AG04449 (cell line): ENCODE measurements at regions of chr12 and their contacts with region 1.

Region 1: GRCh38 chr12:122871851-122872780 is 23.8 kb downstream of the VPS37B start:
- DNase-seq: no peak
- H3K4me3 ChIP-seq: peak overlapping the region; percentile 54
- CTCF ChIP-seq: no peak

Region 2: DNA sequence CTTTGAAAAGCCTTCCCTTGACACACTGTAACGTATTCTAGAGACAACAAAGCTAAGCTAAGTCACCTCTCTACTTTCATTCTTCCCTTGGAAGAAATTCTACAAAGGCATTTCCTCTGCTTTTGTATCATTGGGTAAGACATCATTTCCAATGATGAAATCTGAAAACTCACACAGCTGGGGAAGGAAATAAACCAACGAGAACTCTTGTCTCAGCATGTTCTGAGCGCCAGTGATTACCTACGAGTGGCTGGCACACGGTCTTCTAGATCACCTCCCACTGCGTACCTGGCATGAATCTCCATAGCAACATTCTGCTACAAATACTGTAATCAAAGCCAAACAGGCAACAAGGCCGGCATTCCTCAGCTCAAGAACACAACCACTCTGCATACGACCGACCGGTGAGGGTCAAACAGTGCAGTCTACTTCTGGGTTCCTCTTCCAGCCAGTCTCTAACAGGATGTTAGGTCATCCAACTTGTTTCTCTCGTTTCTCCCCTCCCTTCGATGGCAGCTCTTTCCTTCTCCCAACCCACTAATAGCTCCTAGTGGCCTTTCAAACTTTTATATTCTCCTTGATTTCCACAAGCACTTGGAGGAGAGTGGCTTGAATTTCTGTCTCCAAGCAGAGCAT is 16.2 kb after region 1 on chr12:
- CTCF ChIA-PET with region 1: interaction called, 38 read pairs
- POLR2A ChIA-PET with region 1: interaction called, 9 read pairs
- DNase-seq: no peak
- H3K4me3 ChIP-seq: peak overlapping the region; percentile 4; the same call in 1 of the 2 replicates
- CTCF ChIP-seq: no peak

Region 3: DNA sequence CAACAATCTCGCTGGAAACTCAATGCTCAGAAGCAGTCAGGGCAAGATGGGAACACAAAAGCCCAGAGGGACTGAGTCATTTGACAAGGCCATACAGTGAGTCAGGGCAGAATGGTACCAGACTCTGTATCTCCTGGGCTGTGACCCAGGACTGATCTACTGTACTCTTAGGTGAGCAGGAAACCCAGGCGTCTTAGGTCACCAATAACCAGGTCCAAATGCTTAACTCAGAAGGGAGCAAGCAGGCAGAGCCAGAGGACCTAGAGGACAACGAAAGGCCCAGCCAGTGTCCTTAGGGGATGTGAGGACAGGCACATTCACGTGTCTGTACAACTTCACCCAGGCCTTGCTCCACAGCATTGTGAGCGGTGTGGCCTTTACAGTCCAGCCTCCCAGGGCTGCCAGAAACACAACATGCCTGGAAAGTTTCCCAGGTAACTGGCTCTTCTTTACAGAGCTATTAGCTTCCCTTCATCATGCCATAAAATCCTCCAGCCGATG is 178.3 kb after region 1 on chr12:
- CTCF ChIA-PET with region 1: no interaction called
- POLR2A ChIA-PET with region 1: no interaction called
- DNase-seq: no peak
- H3K4me3 ChIP-seq: no peak overlapping the region
- CTCF ChIP-seq: no peak